Activated CD4-positive, alpha-beta T cell treated with anti-CD3 and anti-CD28 coated beads, Interleukin-2, amount 10 ng/mL, durations not matched to agents 24 days and 14 days (primary cell): ENCODE measurements at regions of chr17 and their contacts with region 1.

Region 1: GRCh38 chr17:59361916-59362810 is 30.7 kb downstream of the YPEL2 start:
- DNase-seq: peak; percentile 86
- H3K4me3 Mint-ChIP-seq: peak overlapping the region; percentile 80
- H3K27ac Mint-ChIP-seq: peak overlapping the region; percentile 96
- H3K4me1 Mint-ChIP-seq: peaks cover 64% of the 10 kb centered on the region
- H3K27me3 Mint-ChIP-seq: no peaks in the 10 kb centered on the region

Region 2: GRCh38 chr17:59234631-59235030 is 127.5 kb before region 1 on chr17:
- intact Hi-C with region 1: no loop called
- DNase-seq: no peak
- H3K4me3 Mint-ChIP-seq: no peak overlapping the region
- H3K27ac Mint-ChIP-seq: no peak overlapping the region
- H3K4me1 Mint-ChIP-seq: peaks cover 4% of the 10 kb centered on the region
- H3K27me3 Mint-ChIP-seq: no peaks in the 10 kb centered on the region

Region 3: GRCh38 chr17:59331129-59331928 is 30.8 kb before region 1 on chr17 and contains the start of gene YPEL2:
- intact Hi-C with region 1: loop called (anchors 1 kb)
- DNase-seq: peak; percentile 97
- H3K4me3 Mint-ChIP-seq: peak within 1 kb of the TSS; percentile 89
- H3K27ac Mint-ChIP-seq: peak within 1 kb of the TSS; percentile 79
- H3K4me1 Mint-ChIP-seq: peaks cover 57% of the 10 kb centered on the region
- H3K27me3 Mint-ChIP-seq: peaks cover 15% of the 10 kb centered on the region
- total RNA-seq, gene YPEL2: 6.2 and 7.0 TPM in 2 replicates

Region 4: DNA sequence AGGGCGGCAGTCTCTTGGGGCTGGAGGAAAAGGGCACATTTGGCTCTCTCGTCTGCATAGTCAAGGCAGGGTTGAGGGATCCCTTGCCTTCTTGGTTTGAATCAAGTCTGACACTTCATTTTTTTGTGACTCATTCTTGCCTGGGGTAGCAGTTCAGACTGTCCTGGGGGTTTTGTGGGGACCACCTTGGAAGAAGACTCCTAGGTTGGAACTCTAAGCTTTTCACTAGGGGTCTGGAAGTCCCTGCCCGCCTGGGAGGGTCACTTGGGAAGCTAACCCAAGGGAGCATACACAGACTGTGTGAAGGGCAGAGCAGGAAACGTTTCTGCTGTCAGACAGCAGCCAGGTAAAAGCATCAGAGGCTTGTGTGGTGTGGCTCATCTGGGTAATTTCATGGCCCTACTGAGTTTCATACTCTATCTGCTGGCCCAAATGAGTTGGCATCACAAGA is 19.5 kb before region 1 on chr17:
- intact Hi-C with region 1: loop called (anchors 1 kb)
- DNase-seq: peak; percentile 67
- H3K4me3 Mint-ChIP-seq: no peak overlapping the region
- H3K27ac Mint-ChIP-seq: peak overlapping the region; percentile 78
- H3K4me1 Mint-ChIP-seq: peaks cover 21% of the 10 kb centered on the region
- H3K27me3 Mint-ChIP-seq: no peaks in the 10 kb centered on the region

Region 5: DNA sequence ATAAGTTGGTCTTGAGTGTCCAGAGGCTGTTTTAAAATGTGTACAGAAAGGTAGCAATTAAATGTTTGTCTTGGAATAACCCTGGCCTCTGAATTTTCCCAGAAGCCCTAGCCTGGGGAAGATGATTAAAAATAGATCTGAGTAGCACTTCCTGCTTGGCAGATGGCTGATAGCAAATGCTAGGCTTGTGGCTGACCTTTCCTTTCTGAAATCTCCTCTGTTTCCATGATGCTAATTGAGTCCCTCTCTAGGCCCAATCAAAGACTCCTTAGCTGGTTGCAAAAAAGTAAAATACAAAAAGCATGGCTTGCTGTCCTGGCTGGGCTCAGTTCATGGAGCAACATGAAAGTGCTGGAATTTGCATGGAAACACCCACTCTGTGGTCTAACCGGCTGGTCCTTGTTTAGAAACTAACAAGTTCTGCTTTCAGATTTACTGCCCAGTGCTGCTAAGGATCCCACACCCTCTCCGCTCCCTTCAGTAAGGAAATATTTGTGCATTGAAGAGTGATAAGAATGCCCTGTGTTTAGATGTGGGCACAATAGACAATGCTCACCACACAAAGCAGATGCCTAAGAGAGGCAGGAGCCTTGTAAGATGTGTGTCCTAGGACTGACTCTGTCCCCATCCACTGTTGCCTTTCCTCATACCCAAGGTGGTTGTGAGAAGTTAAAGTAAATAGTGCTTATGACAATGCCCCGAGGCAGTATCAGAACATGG is 10.1 kb after region 1 on chr17:
- intact Hi-C with region 1: loop called (anchors 1 kb)
- DNase-seq: no peak
- H3K4me3 Mint-ChIP-seq: peak overlapping the region; percentile 55
- H3K27ac Mint-ChIP-seq: peak overlapping the region; percentile 87
- H3K4me1 Mint-ChIP-seq: peaks cover 62% of the 10 kb centered on the region
- H3K27me3 Mint-ChIP-seq: no peaks in the 10 kb centered on the region

Region 6: DNA sequence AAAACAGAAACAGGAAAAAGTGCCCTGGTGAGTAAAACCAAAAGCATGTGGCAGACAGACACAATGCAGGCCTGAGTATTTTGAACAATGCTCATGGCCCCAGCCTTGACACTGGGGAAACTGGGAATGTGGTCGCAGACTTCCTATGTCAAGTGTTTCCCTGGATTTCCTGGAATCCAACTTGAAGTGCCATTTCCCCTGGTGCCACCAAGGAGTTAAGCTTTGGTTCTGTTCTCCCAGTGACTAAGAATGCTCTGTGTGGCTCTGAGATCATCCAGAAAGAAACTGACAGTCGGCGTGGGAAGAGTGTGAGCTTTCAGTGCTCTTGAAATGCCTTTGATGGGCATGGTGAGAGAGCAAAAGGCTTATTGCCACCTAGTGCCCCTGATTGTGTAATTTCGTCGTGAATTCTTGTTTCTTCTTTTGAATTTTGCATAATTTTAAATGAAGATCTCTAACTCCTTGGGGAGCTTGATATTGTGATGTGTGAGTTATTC is 65.3 kb after region 1 on chr17:
- intact Hi-C with region 1: loop called (anchors 1 kb)
- DNase-seq: peak; percentile 61
- H3K4me3 Mint-ChIP-seq: no peak overlapping the region
- H3K27ac Mint-ChIP-seq: peak overlapping the region; percentile 31
- H3K4me1 Mint-ChIP-seq: peaks cover 30% of the 10 kb centered on the region
- H3K27me3 Mint-ChIP-seq: peaks cover 2% of the 10 kb centered on the region

Region 7: GRCh38 chr17:59435238-59435637 is 73.1 kb after region 1 on chr17:
- intact Hi-C with region 1: loop called (anchors 1 kb)
- DNase-seq: no peak
- H3K4me3 Mint-ChIP-seq: peak overlapping the region; percentile 43
- H3K27ac Mint-ChIP-seq: peak overlapping the region; percentile 93
- H3K4me1 Mint-ChIP-seq: peaks cover 60% of the 10 kb centered on the region
- H3K27me3 Mint-ChIP-seq: peaks cover under 1% of the 10 kb centered on the region

Region 8: GRCh38 chr17:59466946-59467801 is 105.0 kb after region 1 on chr17:
- intact Hi-C with region 1: no loop called
- DNase-seq: no peak
- H3K4me3 Mint-ChIP-seq: no peak overlapping the region
- H3K27ac Mint-ChIP-seq: no peak overlapping the region
- H3K4me1 Mint-ChIP-seq: peaks cover 15% of the 10 kb centered on the region
- H3K27me3 Mint-ChIP-seq: no peaks in the 10 kb centered on the region